CD8-positive, alpha-beta memory T cell (primary cell): ENCODE measurements at regions of chr10 and their contacts with region 1.

Region 1: GRCh38 chr10:128150045-128150493 is 23.8 kb upstream of the MKI67 start:
- DNase-seq: peak; percentile 74 to 84 (median 78)
- H3K4me3 ChIP-seq: peak overlapping the region; percentile 79
- H3K4me3 Mint-ChIP-seq: peak overlapping the region; percentile 48 to 86 (median 68)
- H3K27ac ChIP-seq: no peak overlapping the region
- H3K27ac Mint-ChIP-seq: no peak overlapping the region
- H3K4me1 ChIP-seq: peaks cover 4% of the 10 kb centered on the region
- H3K4me1 Mint-ChIP-seq: peaks cover 4 to 18% (median 11%) of the 10 kb centered on the region in 3 donors
- H3K27me3 ChIP-seq: no peaks in the 10 kb centered on the region
- H3K27me3 Mint-ChIP-seq: peaks cover 0 to 6% of the 10 kb centered on the region in 2 donors

Region 2: GRCh38 chr10:128035557-128035973 is 114.5 kb before region 1 on chr10:
- CTCF ChIA-PET with region 1: interaction called, 16 read pairs
- POLR2A ChIA-PET with region 1: no interaction called
- DNase-seq: peak; percentile 52 to 69 (median 59)
- H3K4me3 ChIP-seq: no peak overlapping the region
- H3K4me3 Mint-ChIP-seq: no peak overlapping the region
- H3K27ac ChIP-seq: no peak overlapping the region
- H3K27ac Mint-ChIP-seq: no peak overlapping the region
- H3K4me1 ChIP-seq: no peaks in the 10 kb centered on the region
- H3K4me1 Mint-ChIP-seq: peaks cover 0 to 6% (median 3%) of the 10 kb centered on the region in 3 donors
- H3K27me3 ChIP-seq: no peaks in the 10 kb centered on the region
- H3K27me3 Mint-ChIP-seq: no peaks in the 10 kb centered on the region

Region 3: GRCh38 chr10:128047351-128047750 is 102.7 kb before region 1 on chr10:
- CTCF ChIA-PET with region 1: interaction called, 12 read pairs
- POLR2A ChIA-PET with region 1: no interaction called
- DNase-seq: peak; percentile 76 to 90 (median 80)
- H3K4me3 ChIP-seq: peak overlapping the region; percentile 94
- H3K4me3 Mint-ChIP-seq: peak overlapping the region; percentile 85 to 97 (median 88)
- H3K27ac ChIP-seq: peak overlapping the region; percentile 95
- H3K27ac Mint-ChIP-seq: peak overlapping the region; percentile 94 to 100 (median 97)
- H3K4me1 ChIP-seq: peaks cover 55% of the 10 kb centered on the region
- H3K4me1 Mint-ChIP-seq: peaks cover 57 to 73% (median 64%) of the 10 kb centered on the region in 3 donors
- H3K27me3 ChIP-seq: no peaks in the 10 kb centered on the region
- H3K27me3 Mint-ChIP-seq: no peaks in the 10 kb centered on the region

Region 4: DNA sequence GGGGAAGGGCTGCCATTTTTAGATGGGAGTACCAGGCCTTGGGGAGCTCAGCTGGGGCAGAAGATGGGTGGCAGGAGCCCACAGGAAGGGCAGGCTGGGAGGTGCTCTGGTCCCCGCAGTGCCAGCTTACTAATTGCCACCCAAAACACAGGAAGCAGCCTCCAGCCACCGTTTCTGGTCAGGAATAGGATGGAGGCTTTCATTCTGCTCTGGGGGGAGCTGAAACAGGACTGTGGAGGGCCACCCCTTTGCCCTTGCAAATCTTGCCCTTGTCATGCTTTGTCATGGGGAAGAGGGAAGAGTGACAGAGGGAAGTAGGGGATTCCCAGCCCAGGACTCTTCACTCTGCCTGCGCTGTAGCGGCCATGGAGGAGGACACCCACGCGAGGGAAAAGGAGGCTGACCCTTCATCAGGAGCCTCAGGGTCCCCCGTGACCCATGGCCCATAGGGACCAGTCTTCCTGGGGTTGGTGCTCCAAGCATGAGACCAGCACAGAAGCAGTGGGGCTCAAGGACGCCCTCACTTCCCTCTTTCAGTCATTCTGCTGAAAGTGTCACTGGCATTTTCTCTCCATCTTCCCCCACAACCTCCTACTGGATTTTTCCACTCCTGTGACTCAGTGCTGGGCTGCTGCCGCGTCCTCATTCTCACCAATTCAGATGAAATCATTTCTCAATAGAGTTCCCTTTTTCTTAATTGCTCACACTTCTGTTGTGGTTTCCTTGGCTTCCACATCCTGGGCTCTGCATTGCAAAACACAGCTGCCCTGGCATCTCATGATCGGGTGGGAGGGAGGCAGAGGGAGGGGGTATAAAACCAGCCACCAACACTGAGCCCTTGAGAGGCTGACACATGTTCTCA is 85.7 kb before region 1 on chr10:
- CTCF ChIA-PET with region 1: interaction called, 12 read pairs
- POLR2A ChIA-PET with region 1: no interaction called
- DNase-seq: peak; percentile 52 to 82 (median 68)
- H3K4me3 ChIP-seq: peak overlapping the region; percentile 53
- H3K4me3 Mint-ChIP-seq: peak overlapping the region; percentile 63 to 86 (median 76)
- H3K27ac ChIP-seq: peak overlapping the region; percentile 45
- H3K27ac Mint-ChIP-seq: peak overlapping the region; percentile 57 to 98 (median 91)
- H3K4me1 ChIP-seq: peaks cover 58% of the 10 kb centered on the region
- H3K4me1 Mint-ChIP-seq: peaks cover 82 to 86% (median 83%) of the 10 kb centered on the region in 3 donors
- H3K27me3 ChIP-seq: no peaks in the 10 kb centered on the region
- H3K27me3 Mint-ChIP-seq: no peaks in the 10 kb centered on the region

Region 5: DNA sequence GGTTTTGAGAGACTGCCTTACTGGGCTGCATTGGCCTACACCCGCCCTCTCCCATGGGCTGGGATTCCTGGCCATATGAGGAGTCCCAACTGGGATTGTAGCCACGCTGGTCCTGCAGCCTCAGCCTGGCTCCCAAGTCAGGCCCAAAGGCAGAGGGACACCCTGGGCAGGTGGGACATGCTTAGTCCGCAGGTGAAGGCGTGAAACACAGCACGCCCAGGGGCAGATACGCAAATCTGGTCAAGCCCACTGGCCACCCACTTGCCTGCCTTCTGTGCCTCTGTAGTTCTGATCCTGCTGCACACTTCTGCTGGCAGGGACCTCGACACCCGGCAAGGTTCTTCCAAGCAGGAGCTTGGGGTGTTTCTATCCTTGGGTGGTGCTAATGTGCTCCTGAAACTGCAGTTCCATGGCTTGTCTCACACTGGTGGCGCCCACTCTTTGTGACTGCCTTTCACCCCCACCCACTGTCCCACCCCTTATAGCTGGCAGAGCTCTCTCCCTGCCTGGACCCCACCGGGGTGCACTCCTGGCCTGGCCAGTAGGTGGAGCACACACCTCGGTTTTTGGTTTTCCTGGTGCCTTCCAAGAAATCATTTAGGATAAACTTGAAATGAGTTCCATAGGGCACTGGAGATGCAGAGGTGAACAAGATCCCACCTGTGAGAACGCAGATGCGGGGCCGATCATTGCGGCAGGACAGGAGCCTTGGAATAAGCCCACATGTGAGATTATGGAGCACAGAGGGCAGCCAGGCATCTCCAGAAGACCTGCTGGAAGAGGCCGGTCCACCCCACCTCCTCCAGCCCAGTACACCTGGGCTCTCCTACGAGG is 71.7 kb before region 1 on chr10:
- CTCF ChIA-PET with region 1: interaction called, 15 read pairs
- POLR2A ChIA-PET with region 1: interaction called, 5 read pairs
- DNase-seq: peak in 4 of 5 donors; percentile 20 to 43 (median 24)
- H3K4me3 ChIP-seq: no peak overlapping the region
- H3K4me3 Mint-ChIP-seq: no peak overlapping the region
- H3K27ac ChIP-seq: no peak overlapping the region
- H3K27ac Mint-ChIP-seq: peak overlapping the region in 1 of 8 donors; percentile 32
- H3K4me1 ChIP-seq: no peaks in the 10 kb centered on the region
- H3K4me1 Mint-ChIP-seq: peaks cover 7 to 16% (median 8%) of the 10 kb centered on the region in 3 donors
- H3K27me3 ChIP-seq: no peaks in the 10 kb centered on the region
- H3K27me3 Mint-ChIP-seq: no peaks in the 10 kb centered on the region

Region 6: GRCh38 chr10:128137877-128138276 is 12.2 kb before region 1 on chr10:
- CTCF ChIA-PET with region 1: no interaction called
- POLR2A ChIA-PET with region 1: no interaction called
- DNase-seq: no peak
- H3K4me3 ChIP-seq: no peak overlapping the region
- H3K4me3 Mint-ChIP-seq: no peak overlapping the region
- H3K27ac ChIP-seq: no peak overlapping the region
- H3K27ac Mint-ChIP-seq: no peak overlapping the region
- H3K4me1 ChIP-seq: no peaks in the 10 kb centered on the region
- H3K4me1 Mint-ChIP-seq: no peaks in the 10 kb centered on the region
- H3K27me3 ChIP-seq: no peaks in the 10 kb centered on the region
- H3K27me3 Mint-ChIP-seq: peaks cover 0 to 7% of the 10 kb centered on the region in 2 donors

Region 7: GRCh38 chr10:129123428-129123827 is 973.4 kb after region 1 on chr10:
- CTCF ChIA-PET with region 1: no interaction called
- POLR2A ChIA-PET with region 1: no interaction called
- DNase-seq: no peak
- H3K4me3 ChIP-seq: no peak overlapping the region
- H3K4me3 Mint-ChIP-seq: no peak overlapping the region
- H3K27ac ChIP-seq: no peak overlapping the region
- H3K27ac Mint-ChIP-seq: no peak overlapping the region
- H3K4me1 ChIP-seq: no peaks in the 10 kb centered on the region
- H3K4me1 Mint-ChIP-seq: peaks cover 0 to 11% (median 6%) of the 10 kb centered on the region in 3 donors
- H3K27me3 ChIP-seq: no peaks in the 10 kb centered on the region
- H3K27me3 Mint-ChIP-seq: no peaks in the 10 kb centered on the region